ENCODE measurements at regions of chr12 and their contacts with region 1.

Region 1: GRCh38 chr12:23204933-23205778 is 580.2 kb downstream of the ETNK1 start:
- DNase-seq: peak; percentile 14
- H3K4me3 Mint-ChIP-seq: no peak overlapping the region
- H3K27ac Mint-ChIP-seq: no peak overlapping the region
- H3K4me1 Mint-ChIP-seq: no peaks in the 10 kb centered on the region
- H3K27me3 Mint-ChIP-seq: peaks cover 27% of the 10 kb centered on the region
- CTCF ChIP-seq: peak; percentile 81

Region 2: DNA sequence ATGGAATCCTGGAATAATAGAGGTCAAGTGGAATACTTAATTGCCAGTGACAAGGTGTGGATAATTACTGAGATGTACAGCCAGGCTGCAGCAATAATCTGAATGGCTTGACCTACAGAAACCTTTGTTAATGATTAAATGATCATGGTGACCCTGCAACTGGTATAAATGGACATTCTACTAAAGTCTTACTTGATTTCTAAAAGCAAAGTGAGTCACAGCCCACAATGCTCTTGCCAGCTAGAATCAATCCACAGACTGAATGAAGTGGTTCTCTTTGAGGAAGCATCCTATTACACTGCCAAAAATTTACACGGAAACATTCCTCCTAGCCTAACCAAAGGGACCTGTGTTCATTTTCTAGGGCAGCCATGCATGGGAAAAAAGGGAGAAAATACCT is 225.8 kb after region 1 on chr12:
- CTCF ChIA-PET with region 1: no interaction called
- intact Hi-C with region 1: no loop called
- DNase-seq: no peak
- H3K4me3 Mint-ChIP-seq: no peak overlapping the region
- H3K27ac Mint-ChIP-seq: no peak overlapping the region
- H3K4me1 Mint-ChIP-seq: no peaks in the 10 kb centered on the region
- H3K27me3 Mint-ChIP-seq: no peaks in the 10 kb centered on the region
- CTCF ChIP-seq: no peak

Region 3: DNA sequence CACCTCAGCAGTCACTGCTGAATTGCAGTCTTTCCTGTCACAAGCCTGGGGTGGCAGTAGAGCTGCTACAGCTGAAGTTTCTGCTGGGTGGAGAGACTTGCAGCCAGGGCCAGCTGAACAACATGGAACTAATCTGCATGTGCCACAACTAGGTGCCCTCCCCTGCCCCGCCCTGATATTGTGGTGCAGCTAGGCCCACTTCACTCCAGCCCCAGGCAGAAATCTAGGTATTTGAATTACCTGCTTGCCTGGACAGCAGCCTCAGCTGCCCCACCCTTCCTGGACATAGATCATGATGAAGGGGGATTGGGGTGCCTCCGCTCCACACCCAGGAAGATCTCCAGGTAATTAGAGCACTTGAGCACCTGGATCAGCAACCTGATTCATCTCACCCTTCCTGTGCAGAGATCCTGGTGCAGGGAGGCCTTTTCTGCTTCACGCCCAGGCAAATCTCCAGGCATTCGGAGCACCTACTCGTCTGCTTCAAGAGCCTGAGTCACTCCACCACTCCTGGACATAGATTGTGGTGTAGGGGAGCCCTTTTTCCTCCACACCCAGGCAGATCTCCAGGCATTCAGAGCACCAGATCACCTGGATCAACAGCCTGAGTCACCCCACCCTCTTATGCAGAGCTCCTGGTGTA is 267.3 kb after region 1 on chr12:
- CTCF ChIA-PET with region 1: no interaction called
- intact Hi-C with region 1: no loop called
- DNase-seq: no peak
- H3K4me3 Mint-ChIP-seq: no peak overlapping the region
- H3K27ac Mint-ChIP-seq: no peak overlapping the region
- H3K4me1 Mint-ChIP-seq: no peaks in the 10 kb centered on the region
- H3K27me3 Mint-ChIP-seq: no peaks in the 10 kb centered on the region
- CTCF ChIP-seq: no peak

Region 4: GRCh38 chr12:24838531-24838950 is 1633.4 kb after region 1 on chr12:
- CTCF ChIA-PET with region 1: no interaction called
- intact Hi-C with region 1: loop called (anchors 5 kb)
- DNase-seq: no peak
- H3K4me3 Mint-ChIP-seq: no peak overlapping the region
- H3K27ac Mint-ChIP-seq: no peak overlapping the region
- H3K4me1 Mint-ChIP-seq: no peaks in the 10 kb centered on the region
- H3K27me3 Mint-ChIP-seq: no peaks in the 10 kb centered on the region
- CTCF ChIP-seq: no peak